Right ventricle myocardium inferior (tissue), 1 donor: ENCODE measurements at regions of chrX and their contacts with region 1.

Region 1: DNA sequence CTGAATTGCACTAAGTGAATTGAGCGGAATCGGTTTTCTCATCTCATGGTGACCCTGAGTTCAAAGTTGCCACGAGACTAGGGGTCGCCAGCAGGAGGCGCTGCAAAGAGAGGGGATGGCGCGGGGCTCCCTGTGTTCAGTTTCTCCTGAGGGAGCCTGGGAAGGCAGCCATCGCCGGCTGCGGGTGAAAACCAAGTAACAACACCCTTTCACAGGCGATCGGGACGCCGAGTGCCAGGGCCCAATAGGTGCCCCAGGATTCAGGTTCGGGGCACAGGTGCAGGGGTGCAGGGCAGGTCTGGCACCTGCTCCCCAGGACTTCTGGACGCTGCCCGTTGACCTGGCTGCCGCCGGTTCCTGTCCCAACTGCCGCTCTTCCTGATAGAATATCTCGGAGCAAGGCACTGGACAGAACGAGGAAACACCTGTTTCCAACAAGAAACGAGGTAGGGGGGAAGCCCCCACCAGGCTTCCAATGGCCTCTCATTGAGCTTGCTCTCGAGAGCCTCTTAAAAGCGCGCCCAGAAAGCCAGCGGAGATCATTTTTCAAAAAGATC is 1.1 kb upstream of the FGF16 start:
- DNase-seq: no peak
- ATAC-seq: no peak

Region 2: DNA sequence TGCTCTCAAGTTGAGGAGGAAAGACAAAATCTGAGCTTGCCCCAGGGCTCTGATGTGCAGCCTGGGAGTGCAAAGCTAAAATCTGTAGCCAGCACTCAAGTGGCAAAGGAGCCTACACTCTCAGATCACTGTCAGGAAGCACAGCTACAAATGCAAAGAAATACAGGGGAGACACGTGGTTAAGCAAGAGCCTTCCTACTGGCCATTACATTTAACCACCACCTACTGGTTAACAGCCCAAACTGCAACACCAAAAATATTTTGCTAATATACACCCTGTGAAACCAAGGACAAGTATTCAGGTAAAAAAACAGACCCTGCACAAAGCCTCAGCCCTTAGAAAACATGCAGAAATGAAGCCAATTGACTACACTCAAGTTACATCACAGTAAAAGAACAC is 169.4 kb before region 1 on chrX:
- intact Hi-C with region 1: no loop called
- DNase-seq: no peak
- ATAC-seq: no peak

Region 3: DNA sequence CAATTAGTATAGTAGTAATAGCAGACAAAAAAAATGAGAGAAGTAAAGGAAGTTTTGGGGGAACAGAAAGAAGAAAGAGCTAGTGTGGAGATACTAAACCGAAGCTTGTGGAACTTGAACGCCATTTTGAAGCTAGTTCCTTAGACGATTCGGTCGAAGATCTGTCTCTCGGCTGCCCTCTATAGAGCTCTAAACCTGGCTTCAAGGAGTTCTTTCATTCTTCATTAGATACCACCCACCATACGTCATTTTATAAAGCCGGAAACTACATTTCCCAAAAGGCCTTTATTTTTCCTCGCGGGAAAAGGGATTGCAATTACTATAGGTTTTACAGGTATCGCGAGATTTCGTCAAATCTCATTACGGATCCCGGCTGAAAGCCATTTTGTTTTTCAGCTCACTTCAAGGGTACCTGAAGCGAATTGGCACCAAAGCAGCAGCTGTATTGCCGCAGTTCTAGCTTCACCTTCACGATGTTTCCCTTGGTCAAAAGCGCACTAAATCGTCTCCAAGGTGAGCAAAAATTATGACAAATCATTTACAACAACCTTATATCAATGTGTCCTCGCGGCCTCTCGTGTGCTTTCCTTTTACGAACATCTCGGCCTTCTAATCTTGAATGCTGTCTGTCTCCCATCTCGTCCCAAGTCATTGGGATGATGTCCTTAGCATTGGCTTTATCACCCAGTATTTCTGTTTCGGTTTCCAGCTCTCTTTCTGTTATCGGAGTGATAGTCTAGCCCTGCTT is 453.1 kb after region 1 on chrX and contains the start of gene COX7B:
- intact Hi-C with region 1: loop called (anchors 10 kb)
- DNase-seq: no peak
- ATAC-seq: peak; percentile 84
- total RNA-seq, gene COX7B: 1,849 TPM